CD8-positive, alpha-beta T cell (primary cell): ENCODE measurements at regions of chr2 and their contacts with region 1.

Region 1: GRCh38 chr2:241877989-241878970 is 8.8 kb downstream of the RTP5 start:
- DNase-seq: peak; percentile 45 to 86 (median 73)
- ATAC-seq: no peak
- H3K4me3 ChIP-seq: no peak overlapping the region
- H3K4me3 Mint-ChIP-seq: no peak overlapping the region
- H3K27ac ChIP-seq: no peak overlapping the region
- H3K27ac Mint-ChIP-seq: no peak overlapping the region
- H3K4me1 ChIP-seq: peaks cover 20% of the 10 kb centered on the region
- H3K4me1 Mint-ChIP-seq: peaks cover 25% of the 10 kb centered on the region
- H3K27me3 ChIP-seq: no peaks in the 10 kb centered on the region
- H3K27me3 Mint-ChIP-seq: no peaks in the 10 kb centered on the region
- CTCF ChIP-seq: peak; percentile 56

Region 2: DNA sequence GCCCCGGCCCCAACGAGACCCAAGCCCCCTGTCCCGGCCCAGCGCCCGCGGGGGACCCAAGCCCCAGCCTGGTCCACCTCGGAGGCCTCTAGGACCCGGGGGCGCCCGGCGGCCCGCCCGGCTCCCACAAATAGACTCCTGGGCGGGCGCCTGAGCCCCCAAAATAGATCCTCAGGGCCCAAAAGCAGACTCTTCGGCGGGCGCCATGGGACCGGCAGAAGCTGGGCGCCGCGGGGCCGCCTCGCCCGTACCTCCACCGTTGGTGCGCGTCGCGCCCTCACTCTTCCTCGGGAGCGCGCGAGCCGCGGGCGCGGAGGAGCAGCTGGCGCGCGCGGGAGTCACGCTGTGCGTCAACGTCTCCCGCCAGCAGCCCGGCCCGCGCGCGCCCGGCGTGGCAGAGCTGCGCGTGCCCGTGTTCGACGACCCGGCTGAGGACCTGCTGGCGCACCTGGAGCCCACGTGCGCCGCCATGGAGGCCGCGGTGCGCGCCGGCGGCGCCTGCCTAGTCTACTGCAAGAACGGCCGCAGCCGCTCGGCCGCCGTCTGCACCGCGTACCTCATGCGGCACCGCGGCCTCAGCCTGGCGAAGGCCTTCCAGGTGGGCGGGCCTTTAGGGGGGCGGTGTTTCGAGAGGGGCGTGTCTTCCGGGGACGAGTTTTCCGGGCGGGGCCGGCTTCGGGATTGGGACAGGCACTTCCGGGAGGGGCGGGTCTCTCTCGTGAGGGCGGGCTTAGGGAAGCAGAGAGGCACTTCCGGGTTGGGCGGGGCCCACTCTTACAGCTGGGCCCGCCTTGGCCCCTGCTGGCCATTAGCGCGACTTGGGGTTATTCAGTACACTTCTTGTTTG is 1317.6 kb before region 1 on chr2:
- CTCF ChIA-PET with region 1: no interaction called
- POLR2A ChIA-PET with region 1: no interaction called
- intact Hi-C with region 1: loop called in 1 of 2 experiments (anchors 5 kb)
- DNase-seq: peak; percentile 98 to 100 (median 100)
- ATAC-seq: peak; percentile 59
- H3K4me3 ChIP-seq: peak overlapping the region; percentile 74 to 76
- H3K4me3 Mint-ChIP-seq: peak overlapping the region; percentile 89
- H3K27ac ChIP-seq: peak overlapping the region; percentile 82 to 84
- H3K27ac Mint-ChIP-seq: peak overlapping the region; percentile 96
- H3K4me1 ChIP-seq: peaks cover 80% of the 10 kb centered on the region
- H3K4me1 Mint-ChIP-seq: peaks cover 71% of the 10 kb centered on the region
- H3K27me3 ChIP-seq: no peaks in the 10 kb centered on the region
- H3K27me3 Mint-ChIP-seq: no peaks in the 10 kb centered on the region
- CTCF ChIP-seq: no peak

Region 3: DNA sequence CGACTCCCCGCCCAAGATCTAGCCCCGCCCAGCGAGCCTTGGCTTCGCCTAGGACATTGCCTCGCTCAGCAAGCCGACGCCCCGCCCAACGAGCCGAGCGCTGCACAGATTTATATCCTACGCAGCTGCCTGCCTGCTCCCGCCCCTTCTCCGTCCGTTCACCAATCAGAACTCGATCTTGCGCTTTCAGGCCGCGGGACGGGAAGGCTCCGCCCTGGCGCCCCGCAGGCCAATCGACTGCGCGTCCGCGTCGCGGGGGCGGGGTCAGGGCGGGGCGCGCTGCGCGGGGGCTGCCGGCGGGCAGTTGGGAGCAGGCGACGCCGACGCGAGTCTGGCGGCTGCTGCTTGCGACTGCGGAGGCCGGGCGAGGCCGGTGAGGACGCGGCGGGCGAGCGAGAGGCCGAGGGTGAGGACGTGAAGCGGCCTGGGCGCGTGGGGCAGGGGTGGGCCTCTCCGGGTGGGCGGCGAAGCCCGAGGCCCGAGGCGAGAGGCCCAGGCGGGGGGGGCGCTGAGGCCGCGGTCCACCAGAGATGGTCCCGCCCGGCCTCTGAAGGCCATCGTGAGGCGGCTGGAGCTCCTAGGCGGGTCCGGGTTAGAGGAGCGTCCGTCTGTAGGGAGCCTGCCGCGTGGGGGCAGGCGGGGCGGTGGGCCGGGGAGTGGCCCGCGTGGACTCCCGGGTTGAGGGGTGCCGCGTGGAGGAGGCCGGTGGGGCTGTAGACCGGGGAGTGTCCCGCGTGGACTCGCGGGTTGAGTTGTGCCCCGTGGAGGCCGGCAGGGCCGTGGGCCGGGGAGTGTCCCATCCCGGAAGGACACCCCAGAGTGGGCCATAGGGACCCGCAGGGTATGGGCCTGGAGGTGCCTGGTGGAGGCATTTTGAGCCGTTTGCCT is 522.1 kb before region 1 on chr2 and contains the start of gene FARP2:
- CTCF ChIA-PET with region 1: no interaction called
- POLR2A ChIA-PET with region 1: no interaction called
- intact Hi-C with region 1: loop called (anchors 1 kb)
- DNase-seq: peak; percentile 94 to 99 (median 97)
- ATAC-seq: peak; percentile 94
- H3K4me3 ChIP-seq: peak within 1 kb of the TSS; percentile 55 to 58
- H3K4me3 Mint-ChIP-seq: peak within 1 kb of the TSS; percentile 86
- H3K27ac ChIP-seq: peak within 1 kb of the TSS; percentile 23 to 52
- H3K27ac Mint-ChIP-seq: peak within 1 kb of the TSS; percentile 87
- H3K4me1 ChIP-seq: peaks cover 10% of the 10 kb centered on the region
- H3K4me1 Mint-ChIP-seq: peaks cover 21% of the 10 kb centered on the region
- H3K27me3 ChIP-seq: no peaks in the 10 kb centered on the region
- H3K27me3 Mint-ChIP-seq: no peaks in the 10 kb centered on the region
- CTCF ChIP-seq: no peak
- total RNA-seq, gene FARP2: 20.6 to 22.5 TPM

Region 4: DNA sequence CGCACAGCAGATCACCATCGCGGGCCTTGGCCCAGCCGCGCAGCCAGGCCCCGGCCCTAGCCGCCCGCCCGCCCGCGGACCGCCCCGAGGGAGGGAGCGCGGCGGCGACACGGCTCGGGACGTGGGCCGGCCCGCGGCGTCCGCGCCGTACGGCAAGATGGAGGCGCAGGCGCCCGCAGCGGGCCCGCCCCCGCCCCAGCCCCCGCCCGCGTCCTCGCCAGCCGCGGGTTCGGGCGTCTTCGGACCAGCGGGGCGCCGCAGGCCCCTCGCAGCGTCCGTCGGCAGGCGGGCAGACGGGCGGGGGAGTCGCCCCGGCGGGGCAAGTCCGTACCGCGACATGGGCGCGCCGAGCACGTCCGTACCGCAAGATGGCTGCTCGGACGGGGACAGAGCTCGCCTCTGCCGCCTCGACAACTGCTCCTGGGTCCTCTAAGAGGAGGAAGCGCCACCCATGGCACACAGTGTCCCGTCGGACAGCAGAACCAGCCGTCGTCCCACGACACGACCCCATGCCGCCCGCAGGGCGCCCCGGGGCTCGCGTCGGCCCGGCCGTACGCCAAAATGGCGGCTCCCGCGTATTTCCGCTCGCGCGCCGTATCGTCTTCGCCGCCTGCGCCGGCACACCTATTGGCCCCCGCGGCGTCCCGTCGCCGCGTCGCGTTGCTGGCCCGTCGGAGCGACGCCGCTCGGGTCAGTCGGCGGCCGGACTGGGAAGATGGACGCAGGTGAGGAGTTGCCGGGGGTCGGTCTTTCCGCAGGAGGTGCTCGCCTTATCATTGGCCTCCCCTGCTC is 241.1 kb before region 1 on chr2 and contains the starts of genes ATG4B and THAP4:
- CTCF ChIA-PET with region 1: no interaction called
- POLR2A ChIA-PET with region 1: no interaction called
- intact Hi-C with region 1: loop called in 1 of 2 experiments (anchors 1 kb)
- DNase-seq: peak; percentile 46 to 88 (median 76)
- ATAC-seq: peak; percentile 71
- H3K4me3 ChIP-seq: peak within 1 kb of the TSS; percentile 83 to 95
- H3K4me3 Mint-ChIP-seq: peak within 1 kb of the TSS; percentile 89
- H3K27ac ChIP-seq: peak within 1 kb of the TSS; percentile 80 to 96
- H3K27ac Mint-ChIP-seq: peak within 1 kb of the TSS; percentile 92
- H3K4me1 ChIP-seq: peaks cover 37% of the 10 kb centered on the region
- H3K4me1 Mint-ChIP-seq: peaks cover 55% of the 10 kb centered on the region
- H3K27me3 ChIP-seq: no peaks in the 10 kb centered on the region
- H3K27me3 Mint-ChIP-seq: no peaks in the 10 kb centered on the region
- CTCF ChIP-seq: no peak
- total RNA-seq, gene ATG4B: 94.0 to 94.5 TPM
- total RNA-seq, gene THAP4: 19.5 to 24.3 TPM

Region 5: GRCh38 chr2:241702132-241703031 is 175.9 kb before region 1 on chr2:
- CTCF ChIA-PET with region 1: interaction called, 18 read pairs
- POLR2A ChIA-PET with region 1: interaction called, 4 read pairs
- intact Hi-C with region 1: loop called (anchors 1 kb)
- DNase-seq: peak; percentile 79 to 94 (median 92)
- ATAC-seq: peak; percentile 82
- H3K4me3 ChIP-seq: peak overlapping the region; percentile 49 to 86
- H3K4me3 Mint-ChIP-seq: peak overlapping the region; percentile 85
- H3K27ac ChIP-seq: peak overlapping the region; percentile 63 to 71
- H3K27ac Mint-ChIP-seq: peak overlapping the region; percentile 82
- H3K4me1 ChIP-seq: peaks cover 11% of the 10 kb centered on the region
- H3K4me1 Mint-ChIP-seq: peaks cover 18% of the 10 kb centered on the region
- H3K27me3 ChIP-seq: no peaks in the 10 kb centered on the region
- H3K27me3 Mint-ChIP-seq: no peaks in the 10 kb centered on the region
- CTCF ChIP-seq: peak; percentile 79

Region 6: DNA sequence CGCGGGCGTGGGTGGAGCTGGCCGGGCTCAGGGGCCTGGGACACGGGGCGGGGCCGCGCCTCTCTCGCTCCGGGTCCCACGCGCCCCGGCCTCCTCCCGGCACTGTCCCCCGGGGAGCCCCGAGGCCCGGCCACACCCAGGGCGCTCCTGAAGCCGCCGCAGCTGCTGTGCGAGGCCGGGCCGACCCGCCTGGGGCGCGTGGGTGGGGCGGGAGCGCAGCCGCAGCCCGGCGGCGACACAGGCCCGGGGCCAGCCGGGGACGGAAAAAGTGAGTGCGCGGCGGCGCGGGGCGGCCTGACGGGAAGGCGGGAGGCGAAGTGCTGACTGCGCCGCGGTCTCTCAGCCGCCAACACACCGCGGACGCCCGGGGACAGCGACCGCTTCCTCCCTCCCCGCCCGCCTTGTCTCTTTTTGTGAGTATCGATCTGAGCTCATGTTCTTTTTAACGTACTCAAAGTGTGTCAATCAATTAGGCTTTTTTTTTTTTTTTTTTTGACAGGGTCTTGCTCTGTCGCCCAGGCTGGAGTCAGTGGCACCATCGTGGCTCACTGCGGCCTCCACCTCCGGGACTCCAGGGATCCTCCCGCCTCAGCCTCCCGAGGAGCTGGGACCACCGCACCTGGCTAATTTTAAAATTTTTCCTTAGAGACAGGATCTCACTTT is 34.1 kb before region 1 on chr2:
- CTCF ChIA-PET with region 1: interaction called, 7 read pairs
- POLR2A ChIA-PET with region 1: interaction called, 3 read pairs
- intact Hi-C with region 1: loop called in 1 of 2 experiments (anchors 2 kb)
- DNase-seq: peak in 8 of 9 experiments; percentile 58 to 88 (median 76)
- ATAC-seq: peak; percentile 75
- H3K4me3 ChIP-seq: peak overlapping the region; percentile 37 to 53
- H3K4me3 Mint-ChIP-seq: peak overlapping the region; percentile 75
- H3K27ac ChIP-seq: peak overlapping the region in 1 of 2 experiments; percentile 23
- H3K27ac Mint-ChIP-seq: no peak overlapping the region
- H3K4me1 ChIP-seq: peaks cover 23% of the 10 kb centered on the region
- H3K4me1 Mint-ChIP-seq: peaks cover 28% of the 10 kb centered on the region
- H3K27me3 ChIP-seq: no peaks in the 10 kb centered on the region
- H3K27me3 Mint-ChIP-seq: peaks cover 2% of the 10 kb centered on the region
- CTCF ChIP-seq: no peak